Activated naive CD4-positive, alpha-beta T cell treated with anti-CD3 and anti-CD28 coated beads for 36 hours (primary cell): ENCODE measurements at regions of chr12 and their contacts with region 1.

Region 1: DNA sequence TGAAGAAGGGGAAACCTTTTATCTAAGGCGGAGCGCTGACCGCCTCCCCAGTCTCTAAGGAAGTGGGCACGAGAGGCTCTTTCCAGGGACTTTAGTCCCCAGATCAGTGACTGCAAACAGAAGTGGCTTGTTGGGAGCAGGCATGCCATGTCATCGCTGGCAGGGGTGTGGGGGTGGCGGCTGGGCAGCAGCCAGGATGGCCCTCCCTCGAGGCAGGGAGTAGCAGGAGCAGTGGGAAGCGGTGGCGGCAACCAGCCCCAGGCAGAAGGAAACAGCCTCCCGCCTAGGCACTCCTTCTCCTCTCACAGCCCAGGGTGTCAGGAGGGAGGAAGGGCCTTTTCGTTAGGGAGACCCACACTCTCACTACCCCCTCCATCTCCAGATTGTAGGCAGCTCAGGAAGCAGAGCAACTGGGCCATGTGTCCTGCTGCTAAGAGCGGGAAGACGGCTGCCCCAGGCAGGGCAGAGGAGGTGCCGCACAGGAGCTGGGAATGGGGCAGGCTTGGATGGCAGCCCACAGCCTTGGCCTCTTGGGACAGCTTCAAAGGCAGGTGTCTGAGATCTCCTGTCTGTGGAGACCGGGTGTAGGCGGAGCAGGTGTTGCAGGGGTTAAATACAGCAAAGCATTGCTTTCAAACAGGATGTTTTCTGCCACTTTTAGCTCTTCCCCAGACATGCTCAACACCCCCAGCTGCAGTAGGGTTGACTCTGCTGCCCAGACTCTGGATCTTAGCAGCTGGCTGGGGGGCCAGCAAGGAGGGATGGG is 21.8 kb downstream of the VDR start:
- DNase-seq: peak; percentile 73
- H3K4me3 Mint-ChIP-seq: peak overlapping the region; percentile 78
- H3K27ac Mint-ChIP-seq: peak overlapping the region; percentile 97
- H3K4me1 Mint-ChIP-seq: peaks cover 69% of the 10 kb centered on the region
- H3K27me3 Mint-ChIP-seq: no peaks in the 10 kb centered on the region

Region 2: DNA sequence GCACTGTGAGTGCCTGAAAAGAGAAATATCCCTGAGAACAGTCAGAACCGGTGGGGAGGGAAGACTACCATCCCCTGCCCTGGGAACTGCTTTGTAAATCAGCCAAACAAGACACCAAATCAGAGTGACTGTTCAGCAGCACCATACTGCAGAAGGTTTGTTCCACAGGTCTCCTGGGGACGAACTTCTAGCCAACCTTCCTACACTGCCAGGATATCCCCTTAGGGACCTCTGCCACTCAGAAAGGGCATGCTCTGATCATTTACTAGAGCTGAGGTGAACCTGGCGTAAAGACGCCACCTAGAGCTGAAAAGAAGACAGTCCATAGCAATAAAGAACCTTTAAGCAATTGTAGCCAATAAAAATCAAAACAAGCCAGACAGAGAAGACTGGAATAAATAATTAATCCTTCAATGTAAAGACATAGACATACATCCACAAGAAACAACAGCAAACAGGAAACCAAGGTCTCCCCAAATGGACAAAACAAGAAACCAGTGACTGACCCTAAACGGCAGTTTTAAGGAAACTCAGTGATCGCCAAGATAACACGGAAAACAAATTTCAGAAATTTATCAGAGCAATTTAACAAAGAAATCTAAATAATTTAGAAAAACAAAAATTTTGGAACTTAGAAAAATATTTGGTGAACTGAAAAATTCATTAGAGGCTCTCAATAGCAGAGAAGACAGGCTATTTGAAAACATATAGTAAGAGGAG is 575.1 kb before region 1 on chr12:
- CTCF ChIA-PET with region 1: no interaction called
- intact Hi-C with region 1: no loop called
- DNase-seq: peak; percentile 74
- H3K4me3 Mint-ChIP-seq: peak overlapping the region; percentile 91
- H3K27ac Mint-ChIP-seq: peak overlapping the region; percentile 98
- H3K4me1 Mint-ChIP-seq: peaks cover 73% of the 10 kb centered on the region
- H3K27me3 Mint-ChIP-seq: no peaks in the 10 kb centered on the region

Region 3: DNA sequence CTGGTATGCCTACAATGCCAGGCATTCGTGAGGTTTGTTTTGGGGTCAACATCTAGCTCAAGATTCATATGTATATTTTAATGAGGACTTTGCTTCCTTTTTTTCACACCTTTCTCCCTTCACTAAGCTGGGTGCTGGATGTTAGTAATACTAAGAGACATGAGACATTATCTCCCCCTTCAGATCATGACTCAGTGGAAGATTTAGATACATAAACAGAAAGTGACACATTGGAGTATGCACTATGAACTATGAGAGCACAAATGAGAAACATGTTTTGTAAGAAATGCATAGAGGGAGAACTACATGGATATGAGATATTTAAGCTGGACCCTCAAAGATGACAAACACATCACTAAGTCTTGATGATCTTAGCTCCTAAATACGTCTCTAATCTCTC is 463.5 kb before region 1 on chr12:
- CTCF ChIA-PET with region 1: no interaction called
- intact Hi-C with region 1: loop called (anchors 10 kb)
- DNase-seq: no peak
- H3K4me3 Mint-ChIP-seq: no peak overlapping the region
- H3K27ac Mint-ChIP-seq: peak overlapping the region; percentile 83
- H3K4me1 Mint-ChIP-seq: peaks cover 51% of the 10 kb centered on the region
- H3K27me3 Mint-ChIP-seq: no peaks in the 10 kb centered on the region

Region 4: DNA sequence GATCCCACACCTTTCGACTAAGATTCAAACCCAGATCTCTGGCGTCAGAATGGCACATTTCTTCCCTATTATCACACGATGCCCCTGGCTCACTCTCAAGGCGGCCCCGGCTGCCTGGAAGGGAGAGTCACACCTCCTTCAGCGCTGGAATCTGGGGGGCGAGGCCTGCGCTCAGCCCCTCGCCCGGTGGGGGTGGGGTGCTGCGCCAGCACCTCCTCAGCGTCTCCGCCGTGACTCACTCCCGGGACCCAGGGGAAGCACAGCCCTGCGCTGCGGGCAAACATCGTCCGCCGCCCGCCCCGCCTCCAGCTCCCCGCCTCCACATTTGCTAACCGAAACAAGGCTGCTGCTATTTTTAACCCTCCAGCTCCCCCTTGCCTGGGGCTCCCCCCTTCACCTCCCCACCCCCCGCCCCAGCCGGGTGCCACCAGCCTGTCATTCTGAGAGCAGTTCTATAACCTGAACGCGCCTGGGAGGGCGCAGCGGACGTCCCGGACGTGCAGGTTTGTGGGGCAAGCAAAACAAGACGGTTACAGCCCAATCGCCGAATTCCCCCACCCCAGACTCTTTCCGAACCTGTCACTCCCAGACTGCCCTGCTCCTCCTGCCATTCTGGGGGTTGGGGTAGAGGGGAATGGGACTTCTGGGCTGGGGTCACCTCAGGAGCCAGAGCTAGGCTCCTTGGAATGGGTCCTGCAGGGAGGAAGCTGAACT is 70.0 kb before region 1 on chr12:
- CTCF ChIA-PET with region 1: interaction called, 5 read pairs
- intact Hi-C with region 1: loop called (anchors 1 kb)
- DNase-seq: peak; percentile 99
- H3K4me3 Mint-ChIP-seq: peak overlapping the region; percentile 88
- H3K27ac Mint-ChIP-seq: peak overlapping the region; percentile 98
- H3K4me1 Mint-ChIP-seq: peaks cover 75% of the 10 kb centered on the region
- H3K27me3 Mint-ChIP-seq: no peaks in the 10 kb centered on the region

Region 5: GRCh38 chr12:47860279-47860841 is 22.6 kb before region 1 on chr12:
- CTCF ChIA-PET with region 1: interaction called, 8 read pairs
- intact Hi-C with region 1: loop called (anchors 1 kb)
- DNase-seq: peak; percentile 69
- H3K4me3 Mint-ChIP-seq: peak overlapping the region; percentile 13
- H3K27ac Mint-ChIP-seq: peak overlapping the region; percentile 92
- H3K4me1 Mint-ChIP-seq: peaks cover 44% of the 10 kb centered on the region
- H3K27me3 Mint-ChIP-seq: no peaks in the 10 kb centered on the region

Region 6: GRCh38 chr12:47896633-47897032 is 13.7 kb after region 1 on chr12:
- CTCF ChIA-PET with region 1: interaction called, 17 read pairs
- intact Hi-C with region 1: no loop called
- DNase-seq: no peak
- H3K4me3 Mint-ChIP-seq: no peak overlapping the region
- H3K27ac Mint-ChIP-seq: no peak overlapping the region
- H3K4me1 Mint-ChIP-seq: peaks cover 66% of the 10 kb centered on the region
- H3K27me3 Mint-ChIP-seq: no peaks in the 10 kb centered on the region

Region 7: GRCh38 chr12:47949441-47950308 is 66.7 kb after region 1 on chr12:
- CTCF ChIA-PET with region 1: interaction called, 13 read pairs
- intact Hi-C with region 1: no loop called
- DNase-seq: peak; percentile 72
- H3K4me3 Mint-ChIP-seq: no peak overlapping the region
- H3K27ac Mint-ChIP-seq: no peak overlapping the region
- H3K4me1 Mint-ChIP-seq: peaks cover 4% of the 10 kb centered on the region
- H3K27me3 Mint-ChIP-seq: no peaks in the 10 kb centered on the region